ENCODE measurements at regions of chrX and their contacts with region 1.

Region 1: GRCh38 chrX:66728818-66729271 is 90.0 kb upstream of the EDA2R start:
- DNase-seq: peak; percentile 83
- H3K4me3 ChIP-seq: peak overlapping the region; percentile 92
- H3K27ac ChIP-seq: 0 out of 2 replicates have a peak overlapping the region, but pooled peaks have one; percentile 28
- H3K4me1 ChIP-seq: no peaks in the 10 kb centered on the region
- H3K27me3 ChIP-seq: no peaks in the 10 kb centered on the region

Region 2: DNA sequence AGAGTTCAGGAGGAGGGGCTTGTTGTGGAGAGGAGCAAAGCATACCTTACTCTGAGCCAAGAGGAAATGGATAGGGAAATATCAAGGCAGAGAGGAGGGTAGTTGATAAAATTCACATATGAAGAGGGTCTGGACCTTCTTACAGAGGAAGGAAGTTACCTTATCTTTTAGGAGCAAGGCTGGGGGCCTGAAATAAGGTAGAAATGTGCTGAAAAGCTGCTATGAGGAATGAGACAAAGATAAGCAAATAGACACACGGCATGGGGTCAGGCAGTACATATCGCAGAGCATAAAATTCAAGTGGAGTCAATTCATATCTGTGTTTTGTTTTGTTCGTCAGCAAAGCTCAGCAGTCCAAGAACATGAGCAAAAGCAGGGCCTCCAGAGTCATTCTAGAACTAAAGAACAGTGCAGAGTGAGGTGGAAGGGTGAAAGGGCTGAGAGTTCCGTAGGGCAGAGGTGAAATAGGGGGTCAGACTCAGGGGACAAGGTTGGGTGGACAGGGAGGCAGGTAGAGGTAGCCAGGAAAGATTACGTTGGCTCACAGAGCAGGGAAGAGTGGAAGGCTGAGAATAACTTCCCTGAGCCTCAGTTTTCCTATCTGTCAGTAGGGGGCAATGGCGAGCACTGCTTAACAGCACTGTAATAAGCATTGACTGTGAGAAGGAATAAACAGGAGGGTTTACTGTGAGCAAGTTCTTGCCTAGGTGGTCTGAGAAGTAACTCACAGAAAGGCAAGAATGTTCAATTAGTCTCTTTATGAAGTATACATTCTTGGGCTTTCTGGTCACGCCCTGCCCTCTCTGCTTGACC is 698.1 kb before region 1 on chrX:
- in situ Hi-C with region 1: loop called (anchors 25 kb)
- DNase-seq: peak; percentile 46
- H3K4me3 ChIP-seq: no peak overlapping the region
- H3K27ac ChIP-seq: no peak overlapping the region
- H3K4me1 ChIP-seq: no peaks in the 10 kb centered on the region
- H3K27me3 ChIP-seq: no peaks in the 10 kb centered on the region

Region 3: DNA sequence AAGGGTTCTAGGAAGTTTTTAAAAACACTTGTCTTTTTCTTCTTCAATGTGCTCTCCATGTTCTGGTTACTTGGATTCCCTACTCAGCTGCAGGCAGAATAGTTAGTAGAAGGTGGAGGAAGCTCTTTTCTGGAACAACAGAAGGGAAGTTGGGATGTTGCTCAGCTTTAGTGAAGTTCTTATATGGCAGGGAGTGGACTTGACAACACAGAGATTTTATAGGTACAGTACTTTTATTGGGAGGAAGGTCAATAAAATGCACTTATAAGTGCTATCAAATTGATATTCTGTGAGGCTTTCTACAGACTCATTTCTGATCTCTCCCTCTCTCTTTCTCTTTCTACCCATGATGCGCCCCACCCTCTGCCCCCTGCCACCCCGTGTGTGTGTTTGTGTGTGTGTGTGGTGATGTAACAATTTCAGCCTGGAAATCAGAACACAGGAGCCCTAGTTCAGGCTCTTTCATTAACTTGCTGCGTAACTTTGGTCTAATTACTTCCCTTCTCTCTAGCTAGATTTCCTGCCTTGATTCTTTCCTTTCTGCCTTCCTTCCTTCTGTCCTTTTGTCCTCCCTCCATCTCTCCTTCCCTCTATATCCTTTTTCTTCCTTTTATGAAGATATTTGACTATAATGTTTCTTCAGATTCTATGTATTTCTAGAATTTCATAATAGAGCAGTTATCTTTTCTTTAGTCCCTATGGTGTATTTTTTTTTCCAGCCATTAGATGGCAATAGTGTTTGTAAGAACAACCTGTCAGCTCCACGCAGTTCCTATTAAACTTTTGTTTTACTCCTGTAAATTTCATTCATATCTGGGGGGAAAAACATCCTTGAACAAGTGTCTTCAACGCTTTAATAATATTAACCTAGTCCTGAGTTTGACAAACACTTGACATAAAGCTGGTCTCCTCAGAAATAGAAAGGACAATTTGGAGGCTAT is 527.7 kb before region 1 on chrX:
- in situ Hi-C with region 1: loop called (anchors 10 kb)
- DNase-seq: peak; percentile 47
- H3K4me3 ChIP-seq: no peak overlapping the region
- H3K27ac ChIP-seq: no peak overlapping the region
- H3K4me1 ChIP-seq: no peaks in the 10 kb centered on the region
- H3K27me3 ChIP-seq: no peaks in the 10 kb centered on the region

Region 4: GRCh38 chrX:66221856-66222255 is 507.0 kb before region 1 on chrX:
- in situ Hi-C with region 1: no loop called
- DNase-seq: no peak
- H3K4me3 ChIP-seq: no peak overlapping the region
- H3K27ac ChIP-seq: no peak overlapping the region
- H3K4me1 ChIP-seq: no peaks in the 10 kb centered on the region
- H3K27me3 ChIP-seq: no peaks in the 10 kb centered on the region

Region 5: DNA sequence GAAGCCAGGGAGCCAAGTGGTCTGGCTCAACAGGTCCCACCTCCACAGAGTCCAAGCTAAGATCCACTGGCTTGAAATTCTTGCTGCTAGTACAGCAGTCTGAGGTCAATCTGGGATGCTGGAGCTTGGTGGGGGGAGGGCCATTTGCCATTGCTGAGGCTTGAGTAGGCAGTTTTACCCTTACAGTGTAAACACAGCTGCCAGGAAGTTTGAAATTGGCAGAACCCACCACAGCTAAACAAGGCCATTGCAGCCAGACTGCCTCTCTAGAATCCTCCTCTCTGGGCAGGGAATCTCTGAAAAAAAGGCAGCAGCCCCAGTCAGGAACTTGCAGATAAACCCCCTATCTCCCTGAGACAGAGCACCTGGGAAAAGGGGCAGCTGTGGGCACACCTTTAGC is 174.9 kb before region 1 on chrX:
- in situ Hi-C with region 1: no loop called
- DNase-seq: no peak
- H3K4me3 ChIP-seq: no peak overlapping the region
- H3K27ac ChIP-seq: no peak overlapping the region
- H3K4me1 ChIP-seq: no peaks in the 10 kb centered on the region
- H3K27me3 ChIP-seq: no peaks in the 10 kb centered on the region